ENCODE measurements at regions of chr3 and their contacts with region 1.

Region 1: DNA sequence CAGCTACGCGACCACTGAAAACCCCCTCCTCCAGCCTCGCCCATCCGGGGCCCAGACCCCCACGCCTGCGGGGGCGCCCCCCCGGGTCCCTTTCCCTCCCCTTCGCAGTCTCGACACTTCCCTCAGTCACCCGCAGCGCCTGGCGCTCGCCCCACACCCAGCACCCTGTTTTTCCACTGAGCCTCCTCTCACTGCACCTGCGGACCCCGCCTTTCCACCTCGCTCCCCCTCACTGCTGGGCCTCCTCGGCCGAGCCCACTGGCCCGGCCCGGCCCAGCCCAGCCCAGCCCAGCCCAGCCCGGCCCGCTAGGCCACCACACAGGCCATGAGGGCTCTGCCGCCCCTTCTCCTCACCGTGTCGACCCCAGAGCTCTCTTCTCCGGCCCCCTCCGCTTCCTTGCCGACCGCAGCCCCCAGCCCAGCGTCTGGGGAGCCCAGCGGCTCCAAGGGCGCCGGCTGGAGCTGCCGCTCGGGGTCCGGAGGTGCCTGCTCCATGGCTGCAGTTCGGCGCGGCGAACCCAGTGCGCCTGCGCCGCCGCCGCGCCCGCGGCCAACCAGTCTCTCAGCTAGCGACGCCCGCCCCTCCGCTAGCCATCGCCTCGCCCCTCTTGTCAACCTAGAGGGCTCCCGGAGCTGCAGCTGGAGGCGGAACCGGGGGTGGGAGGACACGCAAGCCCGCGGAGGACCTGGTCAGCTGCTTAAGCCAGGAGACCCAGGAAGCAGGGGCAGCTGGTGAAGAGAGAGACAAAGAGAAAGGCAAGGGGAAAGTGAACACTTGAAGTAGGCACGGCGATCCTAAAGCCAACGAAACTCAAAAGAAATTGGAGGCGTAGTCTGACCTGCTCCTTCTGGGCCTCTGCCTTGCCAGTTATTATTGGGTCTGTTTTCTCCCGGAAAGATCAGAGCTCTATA is at the start of gene SNX4:
- DNase-seq: peak; percentile 90 to 93
- ATAC-seq: peak; percentile 92 to 94
- H3K4me3 ChIP-seq: peak within 1 kb of the TSS; percentile 86 to 98 (median 86)
- H3K27ac ChIP-seq: peak within 1 kb of the TSS; percentile 86 to 94 (median 93)
- H3K4me1 ChIP-seq: peaks cover 11 to 14% of the 10 kb centered on the region in 2 donors
- H3K27me3 ChIP-seq: no peaks in the 10 kb centered on the region
- CTCF ChIP-seq: no peak
- POLR2A ChIP-seq: peak; percentile 60 to 74
- total RNA-seq, gene SNX4: 31.3 to 53.5 (median 38.8) TPM

Region 2: GRCh38 chr3:125322166-125322565 is 197.8 kb before region 1 on chr3:
- in situ Hi-C with region 1: no loop called
- intact Hi-C with region 1: loop called (anchors 10 kb)
- DNase-seq: no peak
- ATAC-seq: peak; percentile 56 to 84
- H3K4me3 ChIP-seq: no peak overlapping the region
- H3K27ac ChIP-seq: no peak overlapping the region
- H3K4me1 ChIP-seq: peaks cover 0 to 6% of the 10 kb centered on the region in 2 donors
- H3K27me3 ChIP-seq: no peaks in the 10 kb centered on the region
- CTCF ChIP-seq: no peak
- POLR2A ChIP-seq: no peak

Region 3: GRCh38 chr3:125585595-125586223 is 65.8 kb after region 1 on chr3:
- in situ Hi-C with region 1: no loop called
- intact Hi-C with region 1: loop called (anchors 5 kb)
- DNase-seq: no peak
- ATAC-seq: peak; percentile 72 to 78
- H3K4me3 ChIP-seq: no peak overlapping the region
- H3K27ac ChIP-seq: peak overlapping the region; percentile 37 to 95 (median 92)
- H3K4me1 ChIP-seq: peaks cover 52 to 65% of the 10 kb centered on the region in 2 donors
- H3K27me3 ChIP-seq: no peaks in the 10 kb centered on the region
- CTCF ChIP-seq: peak; percentile 71 to 85 (median 78)
- POLR2A ChIP-seq: no peak

Region 4: DNA sequence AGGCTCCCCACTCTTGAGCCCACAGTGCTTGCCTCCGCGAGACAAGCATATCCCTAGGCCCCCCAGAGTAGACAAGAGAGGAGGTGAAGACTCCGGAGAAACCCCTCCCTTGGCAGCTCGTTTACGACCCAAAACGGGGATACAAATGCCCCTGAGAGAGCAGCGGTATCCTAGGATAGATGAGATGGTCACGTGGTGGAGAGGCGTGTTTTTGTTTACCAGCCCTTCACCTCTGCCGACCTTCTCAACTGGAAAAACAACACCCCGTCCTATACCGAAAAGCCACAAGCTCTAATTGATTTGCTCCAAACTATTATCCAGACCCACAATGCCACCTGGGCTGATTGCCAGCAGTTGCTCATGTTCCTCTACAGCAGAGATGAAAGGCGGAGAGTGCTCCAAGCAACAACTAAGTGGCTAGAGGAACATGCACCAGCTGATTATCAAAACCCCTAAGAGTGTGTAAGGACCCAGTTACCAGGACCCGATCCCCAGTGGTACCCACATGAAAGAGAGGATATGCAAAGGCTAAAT is 174.9 kb after region 1 on chr3:
- in situ Hi-C with region 1: no loop called
- intact Hi-C with region 1: no loop called
- DNase-seq: no peak
- ATAC-seq: no peak
- H3K4me3 ChIP-seq: no peak overlapping the region
- H3K27ac ChIP-seq: no peak overlapping the region
- H3K4me1 ChIP-seq: no peaks in the 10 kb centered on the region
- H3K27me3 ChIP-seq: no peaks in the 10 kb centered on the region
- CTCF ChIP-seq: no peak
- POLR2A ChIP-seq: no peak